Gastrocnemius medialis (tissue), 4 donors: ENCODE measurements at regions of chr5 and their contacts with region 1.

Region 1: DNA sequence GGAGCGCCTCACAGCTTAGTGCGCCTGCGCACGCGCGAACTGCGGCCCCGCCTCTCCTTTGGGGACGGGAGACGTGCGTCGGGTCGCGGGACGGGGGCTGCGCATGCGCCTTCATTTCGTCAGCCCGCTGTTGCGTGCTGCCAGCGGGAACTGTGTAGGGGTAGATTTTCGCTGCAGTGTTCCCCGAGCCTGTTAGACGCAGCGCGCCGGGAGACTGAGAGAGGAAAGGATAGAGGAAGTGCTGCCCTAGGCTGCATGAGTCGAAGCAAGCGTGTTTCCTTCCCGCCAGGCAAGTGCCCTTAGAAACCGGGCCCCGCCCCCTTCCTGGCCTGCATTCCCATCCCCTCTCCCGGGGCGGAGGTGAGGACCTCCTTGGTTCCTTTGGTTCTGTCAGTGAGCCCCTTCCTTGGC is 12.3 kb downstream of the ITGA1 start:
- DNase-seq: peak; percentile 89 to 93
- ATAC-seq: peak; percentile 88 to 90
- H3K4me3 ChIP-seq: peak overlapping the region; percentile 62 to 81 (median 76)
- H3K27ac ChIP-seq: peak overlapping the region; percentile 88 to 96 (median 92)
- H3K4me1 ChIP-seq: peaks cover 51 to 55% of the 10 kb centered on the region in 2 donors
- H3K27me3 ChIP-seq: no peaks in the 10 kb centered on the region
- CTCF ChIP-seq: no peak
- POLR2A ChIP-seq: peak; percentile 81 to 84

Region 2: DNA sequence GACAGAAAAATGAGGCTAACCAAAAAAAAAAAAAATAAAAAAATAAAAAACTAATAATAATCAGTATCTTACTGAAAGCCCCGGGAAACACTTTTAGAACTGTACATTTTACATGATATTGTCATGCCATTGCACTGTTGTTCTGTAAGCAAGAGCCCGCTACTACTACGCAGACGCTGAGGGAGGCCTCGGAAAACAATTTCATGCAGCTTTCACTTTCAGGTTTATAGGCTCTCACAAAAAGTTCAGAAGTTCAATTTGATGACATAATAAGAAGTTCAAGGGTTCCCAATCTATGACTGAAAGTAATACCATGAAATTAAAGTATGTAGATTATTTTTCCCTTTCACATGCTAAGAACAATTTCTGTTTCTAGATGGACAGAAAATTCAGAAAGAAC is 330.6 kb before region 1 on chr5:
- in situ Hi-C with region 1: no loop called
- intact Hi-C with region 1: no loop called
- DNase-seq: no peak
- ATAC-seq: no peak
- H3K4me3 ChIP-seq: no peak overlapping the region
- H3K27ac ChIP-seq: no peak overlapping the region
- H3K4me1 ChIP-seq: no peaks in the 10 kb centered on the region
- H3K27me3 ChIP-seq: no peaks in the 10 kb centered on the region
- CTCF ChIP-seq: no peak
- POLR2A ChIP-seq: no peak

Region 3: GRCh38 chr5:52893105-52893504 is 93.1 kb after region 1 on chr5:
- in situ Hi-C with region 1: no loop called
- intact Hi-C with region 1: no loop called
- DNase-seq: no peak
- ATAC-seq: peak in 1 of 2 donors; percentile 58
- H3K4me3 ChIP-seq: no peak overlapping the region
- H3K27ac ChIP-seq: peak overlapping the region in 1 of 4 donors; percentile 47
- H3K4me1 ChIP-seq: peaks cover 15 to 29% of the 10 kb centered on the region in 2 donors
- H3K27me3 ChIP-seq: no peaks in the 10 kb centered on the region
- CTCF ChIP-seq: no peak
- POLR2A ChIP-seq: no peak

Region 4: DNA sequence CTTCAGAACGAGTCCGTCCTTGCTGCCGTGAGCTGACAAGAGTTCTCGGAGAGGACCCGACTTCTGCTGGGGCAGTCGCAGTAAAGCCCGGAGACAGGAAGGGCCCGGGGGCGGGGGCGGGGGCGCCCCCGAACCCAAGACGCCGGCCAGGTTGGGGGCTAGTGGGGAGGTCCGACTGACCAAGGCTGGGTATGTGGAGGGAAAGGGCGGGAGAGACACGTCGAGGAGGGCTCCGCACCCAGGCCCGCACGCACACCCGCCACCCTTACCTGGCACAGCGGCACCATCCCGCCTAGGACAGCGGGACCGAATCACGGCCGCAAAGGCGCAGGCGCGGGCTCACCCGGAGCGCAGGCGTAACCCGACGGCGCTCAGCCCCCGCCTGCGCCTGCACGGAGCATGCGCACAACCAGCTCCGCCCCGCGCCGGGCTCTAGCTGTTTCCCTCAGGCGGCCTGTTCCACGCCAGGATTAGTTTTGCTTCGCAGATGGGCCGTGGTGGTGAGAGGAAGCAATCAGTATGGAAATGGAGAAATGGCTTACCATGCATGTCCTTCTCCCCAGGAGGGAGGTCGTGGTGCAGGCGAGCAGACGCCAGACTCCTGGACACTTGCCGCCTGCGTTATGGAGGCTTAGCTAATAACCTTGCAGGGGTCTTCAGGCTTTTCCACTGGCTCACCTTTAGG is 309.6 kb after region 1 on chr5 and contains the start of gene MOCS2:
- in situ Hi-C with region 1: no loop called
- intact Hi-C with region 1: loop called (anchors 5 kb)
- DNase-seq: peak; percentile 77 to 86
- ATAC-seq: peak; percentile 92 to 95
- H3K4me3 ChIP-seq: peak within 1 kb of the TSS; percentile 72 to 87 (median 82)
- H3K27ac ChIP-seq: peak within 1 kb of the TSS; percentile 80 to 88 (median 86)
- H3K4me1 ChIP-seq: peaks cover 18 to 20% of the 10 kb centered on the region in 2 donors
- H3K27me3 ChIP-seq: no peaks in the 10 kb centered on the region
- CTCF ChIP-seq: no peak
- POLR2A ChIP-seq: peak; percentile 59 to 63
- total RNA-seq, gene MOCS2: 32.0 to 58.6 (median 53.1) TPM

Region 5: GRCh38 chr5:54455413-54456157 is 1655.6 kb after region 1 on chr5 and contains the start of gene HSPB3:
- in situ Hi-C with region 1: no loop called
- intact Hi-C with region 1: loop called (anchors 2 kb)
- DNase-seq: peak; percentile 78 to 81
- ATAC-seq: peak; percentile 79 to 90
- H3K4me3 ChIP-seq: peak within 1 kb of the TSS; percentile 56 to 61 (median 58)
- H3K27ac ChIP-seq: peak within 1 kb of the TSS; percentile 86 to 89 (median 86)
- H3K4me1 ChIP-seq: peaks cover 25 to 26% of the 10 kb centered on the region in 2 donors
- H3K27me3 ChIP-seq: no peaks in the 10 kb centered on the region
- CTCF ChIP-seq: peak in 1 of 5 experiments; percentile 9
- POLR2A ChIP-seq: peak; percentile 93 to 97
- total RNA-seq, gene HSPB3: 68.1 to 510 (median 204) TPM